ENCODE measurements at regions of chr1 and their contacts with region 1.

Region 1: GRCh38 chr1:223244366-223245103 is 101.5 kb upstream of the TLR5 start:
- DNase-seq: peak; percentile 58
- H3K4me3 Mint-ChIP-seq: no peak overlapping the region
- H3K27ac Mint-ChIP-seq: peak overlapping the region; percentile 69
- H3K4me1 Mint-ChIP-seq: peaks cover 45% of the 10 kb centered on the region
- H3K27me3 Mint-ChIP-seq: no peaks in the 10 kb centered on the region

Region 2: DNA sequence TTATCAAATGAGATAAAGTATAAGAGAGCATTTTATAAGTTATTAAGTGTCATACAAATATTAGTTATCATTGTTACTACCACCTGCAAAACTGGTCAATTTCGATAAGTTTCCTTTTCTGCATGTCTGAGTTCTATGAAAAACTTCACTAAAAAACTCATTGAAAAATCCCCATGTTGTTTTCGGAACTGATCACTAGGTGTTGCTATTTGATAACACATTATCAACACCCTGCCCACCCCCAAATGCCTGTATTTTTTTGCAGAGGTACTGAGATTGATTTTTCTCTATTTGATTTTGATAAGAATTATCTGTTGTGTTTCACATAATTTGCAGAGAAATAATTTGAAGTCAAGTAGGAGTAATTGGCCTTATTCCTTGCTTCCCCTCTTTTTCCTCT is 451.8 kb before region 1 on chr1:
- CTCF ChIA-PET with region 1: no interaction called
- intact Hi-C with region 1: loop called (anchors 10 kb)
- DNase-seq: no peak
- H3K4me3 Mint-ChIP-seq: no peak overlapping the region
- H3K27ac Mint-ChIP-seq: no peak overlapping the region
- H3K4me1 Mint-ChIP-seq: peaks cover 6% of the 10 kb centered on the region
- H3K27me3 Mint-ChIP-seq: no peaks in the 10 kb centered on the region

Region 3: GRCh38 chr1:223189903-223190724 is 54.4 kb before region 1 on chr1:
- CTCF ChIA-PET with region 1: no interaction called
- intact Hi-C with region 1: loop called (anchors 1 kb)
- DNase-seq: peak; percentile 76
- H3K4me3 Mint-ChIP-seq: no peak overlapping the region
- H3K27ac Mint-ChIP-seq: peak overlapping the region; percentile 67
- H3K4me1 Mint-ChIP-seq: peaks cover 41% of the 10 kb centered on the region
- H3K27me3 Mint-ChIP-seq: peaks cover 9% of the 10 kb centered on the region

Region 4: GRCh38 chr1:223298701-223299100 is 54.2 kb after region 1 on chr1:
- CTCF ChIA-PET with region 1: no interaction called
- intact Hi-C with region 1: loop called (anchors 5 kb)
- DNase-seq: no peak
- H3K4me3 Mint-ChIP-seq: no peak overlapping the region
- H3K27ac Mint-ChIP-seq: no peak overlapping the region
- H3K4me1 Mint-ChIP-seq: peaks cover 28% of the 10 kb centered on the region
- H3K27me3 Mint-ChIP-seq: no peaks in the 10 kb centered on the region

Region 5: DNA sequence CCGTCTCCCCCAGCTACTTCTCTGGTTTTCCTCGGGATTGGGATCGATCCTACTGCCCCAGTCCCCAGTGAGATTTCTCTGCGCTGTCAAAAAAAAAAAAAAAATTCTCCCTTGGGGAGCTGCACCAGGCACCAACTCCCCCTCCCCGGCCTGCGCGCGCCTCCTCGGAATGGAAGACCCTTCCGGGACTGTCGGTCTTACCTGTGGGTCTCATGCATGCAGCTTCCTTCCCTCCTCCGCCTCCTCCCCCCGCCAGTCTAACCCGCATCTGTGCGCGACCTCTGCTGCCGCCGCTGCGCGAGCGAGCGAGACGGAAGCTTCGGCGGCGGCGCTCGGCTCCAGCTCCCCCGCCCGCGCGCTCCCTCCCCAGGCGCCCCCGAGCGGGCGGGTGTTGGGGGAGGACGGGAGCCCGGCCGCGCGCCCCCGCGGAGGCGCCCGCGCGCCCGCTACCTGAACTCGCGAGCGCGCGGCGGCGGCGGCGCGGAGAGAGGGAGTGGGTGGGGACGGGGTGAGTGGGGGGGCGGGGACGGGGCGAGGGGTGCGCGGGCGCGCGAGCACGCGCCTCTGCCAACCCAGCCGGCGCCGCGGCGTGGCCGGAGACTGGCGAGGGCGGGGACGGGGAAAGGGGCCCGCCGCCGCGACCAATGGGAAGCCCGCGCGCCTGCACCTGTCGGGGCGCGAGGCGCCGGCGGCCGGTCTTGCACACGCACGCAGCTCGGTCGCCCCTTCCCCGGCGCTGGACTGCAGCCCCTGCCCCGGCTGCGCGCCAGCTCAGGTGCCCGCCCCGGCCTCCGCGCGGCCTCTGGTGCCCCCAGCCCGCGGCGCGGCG is 119.5 kb after region 1 on chr1 and contains the start of gene SUSD4:
- CTCF ChIA-PET with region 1: no interaction called
- intact Hi-C with region 1: loop called (anchors 1 kb)
- DNase-seq: peak; percentile 77
- H3K4me3 Mint-ChIP-seq: peak within 1 kb of the TSS; percentile 89
- H3K27ac Mint-ChIP-seq: no peak within 1 kb of the TSS
- H3K4me1 Mint-ChIP-seq: peaks cover 18% of the 10 kb centered on the region
- H3K27me3 Mint-ChIP-seq: peaks cover 10% of the 10 kb centered on the region
- total RNA-seq, gene SUSD4: 1.1 to 1.8 TPM

Measured in activated naive CD4-positive, alpha-beta T cell treated with anti-CD3 and anti-CD28 coated beads for 36 hours (primary cell).